T-cell (primary cell): ENCODE measurements at regions of chr12 and their contacts with region 1.

Region 1: DNA sequence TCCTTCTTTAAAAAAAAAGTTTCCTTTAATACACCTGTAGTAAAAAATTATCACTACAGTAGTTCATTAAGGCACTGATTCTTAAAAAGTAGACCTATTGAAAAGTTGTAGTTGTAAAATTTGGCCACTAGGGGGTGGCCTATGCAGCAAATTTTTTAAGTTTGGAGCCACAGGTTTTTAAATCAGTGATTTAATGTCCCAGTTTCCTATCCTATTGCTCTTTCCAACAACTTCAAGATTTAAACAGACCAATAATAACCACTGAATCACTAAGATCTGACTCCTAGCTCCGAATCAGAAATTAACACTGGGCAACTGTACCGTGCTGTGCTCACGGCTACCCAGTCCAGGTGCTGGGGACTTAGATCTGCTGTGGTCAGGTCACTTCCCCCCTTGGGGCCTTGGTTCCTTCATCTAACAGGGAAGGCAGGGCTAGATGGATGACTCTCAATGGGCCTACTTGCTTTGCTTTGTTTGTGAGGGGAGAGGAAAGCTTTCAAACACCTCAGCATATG is 279.3 kb downstream of the MED13L start:
- DNase-seq: peak in 7 of 35 experiments; percentile 5 to 67 (median 11)
- ATAC-seq: peak in 2 of 4 experiments; percentile 31 to 44
- H3K4me3 ChIP-seq: no peak overlapping the region
- H3K4me3 Mint-ChIP-seq: no peak overlapping the region
- H3K27ac ChIP-seq: no peak overlapping the region
- H3K27ac Mint-ChIP-seq: no peak overlapping the region
- H3K4me1 ChIP-seq: peaks cover 0 to 4% of the 10 kb centered on the region in 2 experiments
- H3K4me1 Mint-ChIP-seq: peaks cover 13 to 18% (median 17%) of the 10 kb centered on the region in 3 donors
- H3K27me3 ChIP-seq: no peaks in the 10 kb centered on the region
- H3K27me3 Mint-ChIP-seq: no peaks in the 10 kb centered on the region

Region 2: GRCh38 chr12:116599285-116600136 is 601.3 kb after region 1 on chr12:
- CTCF ChIA-PET with region 1: interaction called, 5 to 10 read pairs
- POLR2A ChIA-PET with region 1: no interaction called
- DNase-seq: peak in 34 of 35 experiments; percentile 15 to 71 (median 42)
- ATAC-seq: peak; percentile 40 to 81 (median 70)
- H3K4me3 ChIP-seq: no peak overlapping the region
- H3K4me3 Mint-ChIP-seq: no peak overlapping the region
- H3K27ac ChIP-seq: no peak overlapping the region
- H3K27ac Mint-ChIP-seq: no peak overlapping the region
- H3K4me1 ChIP-seq: peaks cover 8 to 23% of the 10 kb centered on the region in 2 experiments
- H3K4me1 Mint-ChIP-seq: peaks cover 17 to 24% (median 19%) of the 10 kb centered on the region in 3 donors
- H3K27me3 ChIP-seq: peaks cover 0 to 6% of the 10 kb centered on the region in 2 experiments
- H3K27me3 Mint-ChIP-seq: peaks cover 0 to 1% of the 10 kb centered on the region in 2 donors